ENCODE measurements at regions of chr3 and their contacts with region 1.

Region 1: DNA sequence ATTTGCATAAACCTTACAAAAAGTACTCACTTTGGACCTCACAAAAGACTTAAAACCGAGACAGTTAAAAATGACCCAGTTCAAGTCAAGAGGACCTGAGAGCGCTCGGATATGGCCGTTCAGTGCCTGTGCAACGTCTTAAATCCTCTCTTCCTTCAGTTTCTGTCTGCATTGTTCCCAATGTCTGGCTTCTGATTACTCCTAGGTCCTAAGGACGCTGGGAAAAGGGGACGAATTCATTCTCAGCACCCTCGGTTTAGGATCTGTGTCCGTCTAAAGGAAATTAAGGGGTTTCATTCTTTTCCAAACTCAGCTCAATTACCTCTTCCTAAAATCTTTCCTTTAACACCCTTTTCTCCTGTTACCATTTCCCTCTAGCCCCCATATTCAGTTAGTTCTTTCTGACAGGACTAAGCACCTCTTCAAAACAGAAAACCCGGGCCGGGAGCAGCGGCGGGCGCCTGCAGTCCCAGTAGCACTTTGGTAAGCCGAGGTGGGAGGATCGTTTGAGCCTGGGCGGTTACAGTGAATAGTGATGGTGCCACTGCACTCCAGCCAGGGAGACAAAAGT is 970 bp downstream of the DPPA4 start:
- DNase-seq: no peak
- H3K4me3 ChIP-seq: peak overlapping the region; percentile 95 to 100 (median 96)
- H3K27ac ChIP-seq: peak overlapping the region; percentile 67
- H3K4me1 ChIP-seq: peaks cover 7 to 19% (median 14%) of the 10 kb centered on the region in 4 experiments
- H3K27me3 ChIP-seq: no peaks in the 10 kb centered on the region
- CTCF ChIP-seq: no peak
- EP300 ChIP-seq: no peak
- POLR2A ChIP-seq: peak in 1 of 2 experiments; percentile 30; a peak in 1 of 3 replicates
- RAD21 ChIP-seq: no peak

Region 2: GRCh38 chr3:109177908-109178307 is 158.5 kb before region 1 on chr3:
- CTCF ChIA-PET with region 1: no interaction called
- POLR2A ChIA-PET with region 1: no interaction called
- DNase-seq: no peak
- H3K4me3 ChIP-seq: no peak overlapping the region
- H3K27ac ChIP-seq: no peak overlapping the region
- H3K4me1 ChIP-seq: no peaks in the 10 kb centered on the region
- H3K27me3 ChIP-seq: no peaks in the 10 kb centered on the region
- CTCF ChIP-seq: no peak
- EP300 ChIP-seq: no peak
- POLR2A ChIP-seq: no peak
- RAD21 ChIP-seq: no peak

Region 3: GRCh38 chr3:109275702-109276293 is 60.6 kb before region 1 on chr3:
- CTCF ChIA-PET with region 1: interaction called, 4 read pairs
- POLR2A ChIA-PET with region 1: interaction called, 27 read pairs
- DNase-seq: peak; percentile 3 to 63
- H3K4me3 ChIP-seq: no peak overlapping the region
- H3K27ac ChIP-seq: no peak overlapping the region
- H3K4me1 ChIP-seq: no peaks in the 10 kb centered on the region; a peak in 2 of 7 replicates
- H3K27me3 ChIP-seq: no peaks in the 10 kb centered on the region
- CTCF ChIP-seq: peak; percentile 55 to 83 (median 63)
- EP300 ChIP-seq: 0 out of 3 replicates have a peak, but pooled peaks of 1 of the 2 experiments have one; percentile 3
- POLR2A ChIP-seq: no peak
- RAD21 ChIP-seq: peak; percentile 92 to 97

Region 4: DNA sequence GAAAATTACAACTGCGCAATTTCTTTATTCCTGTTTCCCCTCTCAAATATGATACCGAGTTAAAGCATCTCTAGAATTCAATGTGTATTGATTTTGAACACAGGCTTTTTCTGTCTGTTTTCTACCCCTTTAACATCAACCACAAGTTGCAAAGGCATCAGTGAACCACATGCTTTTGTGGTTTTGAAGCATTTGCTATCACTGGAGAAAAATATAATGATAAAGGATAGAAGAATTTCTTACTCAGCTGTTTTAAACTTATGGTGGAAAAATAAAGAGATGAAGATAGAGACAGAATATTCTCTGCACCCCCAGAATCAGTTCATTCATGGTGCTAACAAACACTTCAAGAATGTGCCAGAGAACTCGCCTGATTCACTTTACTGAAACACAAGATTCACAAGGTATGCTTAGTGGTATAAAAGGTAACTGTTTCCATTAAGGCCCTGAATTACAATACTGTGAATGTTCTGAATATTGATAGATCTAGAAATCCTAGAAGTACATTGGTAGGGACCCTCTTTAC is 10.5 kb after region 1 on chr3:
- CTCF ChIA-PET with region 1: interaction called, 9 read pairs
- POLR2A ChIA-PET with region 1: interaction called, 681 read pairs
- DNase-seq: no peak
- H3K4me3 ChIP-seq: no peak overlapping the region
- H3K27ac ChIP-seq: no peak overlapping the region
- H3K4me1 ChIP-seq: peaks cover 0 to 11% (median 3%) of the 10 kb centered on the region in 4 experiments; a peak in 3 of 7 replicates
- H3K27me3 ChIP-seq: no peaks in the 10 kb centered on the region
- CTCF ChIP-seq: no peak
- EP300 ChIP-seq: no peak
- POLR2A ChIP-seq: no peak
- RAD21 ChIP-seq: no peak

Region 5: GRCh38 chr3:109355625-109356441 is 19.5 kb after region 1 on chr3:
- CTCF ChIA-PET with region 1: interaction called, 11 read pairs
- POLR2A ChIA-PET with region 1: interaction called, 402 read pairs
- DNase-seq: peak in 1 of 2 experiments; percentile 92
- H3K4me3 ChIP-seq: peak overlapping the region in 3 of 4 experiments; percentile 15 to 48 (median 26); a peak in 4 of 8 replicates
- H3K27ac ChIP-seq: peak overlapping the region; percentile 36; the same call in 1 of the 2 replicates
- H3K4me1 ChIP-seq: peaks cover 2 to 12% (median 7%) of the 10 kb centered on the region in 4 experiments; a peak in 6 of 7 replicates
- H3K27me3 ChIP-seq: no peaks in the 10 kb centered on the region
- CTCF ChIP-seq: no peak
- EP300 ChIP-seq: no peak
- POLR2A ChIP-seq: peak in 1 of 2 experiments; percentile 11
- RAD21 ChIP-seq: no peak

Region 6: DNA sequence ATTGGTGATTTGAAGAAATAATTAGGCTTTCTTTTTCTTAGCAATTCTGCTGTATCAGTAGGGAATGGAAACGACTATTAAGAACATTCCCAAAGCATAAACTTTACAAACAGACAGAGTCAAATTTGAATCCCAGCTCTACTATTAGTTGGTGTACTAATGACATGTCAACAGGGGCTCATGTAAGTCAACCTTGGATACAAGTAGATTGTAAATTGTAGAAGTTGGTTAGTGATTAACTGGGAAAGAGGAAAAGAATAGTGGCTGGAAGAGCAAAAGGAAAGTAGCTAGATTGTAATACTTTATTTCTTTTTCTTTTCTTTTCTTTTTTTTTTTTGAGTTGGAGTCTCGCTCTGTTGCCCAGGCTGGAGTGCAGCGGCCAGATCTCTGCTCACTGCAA is 39.6 kb after region 1 on chr3:
- CTCF ChIA-PET with region 1: interaction called, 3 read pairs
- POLR2A ChIA-PET with region 1: interaction called, 10 read pairs
- DNase-seq: no peak
- H3K4me3 ChIP-seq: no peak overlapping the region
- H3K27ac ChIP-seq: no peak overlapping the region
- H3K4me1 ChIP-seq: no peaks in the 10 kb centered on the region
- H3K27me3 ChIP-seq: no peaks in the 10 kb centered on the region
- CTCF ChIP-seq: no peak
- EP300 ChIP-seq: no peak
- POLR2A ChIP-seq: no peak
- RAD21 ChIP-seq: no peak

Region 7: DNA sequence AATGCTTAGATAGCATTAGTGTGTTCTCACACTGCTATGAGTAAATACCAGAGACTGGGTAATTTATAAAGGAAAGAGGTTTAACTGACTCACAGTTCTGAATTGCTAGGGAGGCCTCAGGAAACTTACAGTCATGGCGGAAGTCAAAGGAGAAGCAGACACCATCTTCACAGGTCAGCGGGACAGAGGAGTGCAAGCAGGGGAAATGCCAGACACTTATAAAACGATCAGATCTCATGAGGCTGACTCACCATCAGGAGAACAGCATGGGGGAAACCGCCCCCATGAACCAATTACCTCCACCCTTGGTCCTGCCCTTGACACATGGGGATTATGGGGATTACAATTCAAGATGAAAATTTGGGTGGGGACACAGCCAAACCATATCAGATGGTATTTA is 382.5 kb after region 1 on chr3:
- CTCF ChIA-PET with region 1: no interaction called
- POLR2A ChIA-PET with region 1: no interaction called
- DNase-seq: no peak
- H3K4me3 ChIP-seq: no peak overlapping the region
- H3K27ac ChIP-seq: no peak overlapping the region
- H3K4me1 ChIP-seq: no peaks in the 10 kb centered on the region
- H3K27me3 ChIP-seq: no peaks in the 10 kb centered on the region; a peak in 1 of 7 replicates
- CTCF ChIP-seq: no peak
- EP300 ChIP-seq: no peak
- POLR2A ChIP-seq: no peak
- RAD21 ChIP-seq: no peak